Activated naive CD4-positive, alpha-beta T cell treated with anti-CD3 and anti-CD28 coated beads for 36 hours (primary cell): ENCODE measurements at regions of chr1 and their contacts with region 1.

Region 1: GRCh38 chr1:182839209-182840065 is at the start of gene DHX9:
- DNase-seq: peak; percentile 94
- H3K4me3 Mint-ChIP-seq: peak within 1 kb of the TSS; percentile 90
- H3K27ac Mint-ChIP-seq: peak within 1 kb of the TSS; percentile 95
- H3K4me1 Mint-ChIP-seq: peaks cover 44% of the 10 kb centered on the region
- H3K27me3 Mint-ChIP-seq: no peaks in the 10 kb centered on the region
- total RNA-seq, gene DHX9: 194 TPM

Region 2: DNA sequence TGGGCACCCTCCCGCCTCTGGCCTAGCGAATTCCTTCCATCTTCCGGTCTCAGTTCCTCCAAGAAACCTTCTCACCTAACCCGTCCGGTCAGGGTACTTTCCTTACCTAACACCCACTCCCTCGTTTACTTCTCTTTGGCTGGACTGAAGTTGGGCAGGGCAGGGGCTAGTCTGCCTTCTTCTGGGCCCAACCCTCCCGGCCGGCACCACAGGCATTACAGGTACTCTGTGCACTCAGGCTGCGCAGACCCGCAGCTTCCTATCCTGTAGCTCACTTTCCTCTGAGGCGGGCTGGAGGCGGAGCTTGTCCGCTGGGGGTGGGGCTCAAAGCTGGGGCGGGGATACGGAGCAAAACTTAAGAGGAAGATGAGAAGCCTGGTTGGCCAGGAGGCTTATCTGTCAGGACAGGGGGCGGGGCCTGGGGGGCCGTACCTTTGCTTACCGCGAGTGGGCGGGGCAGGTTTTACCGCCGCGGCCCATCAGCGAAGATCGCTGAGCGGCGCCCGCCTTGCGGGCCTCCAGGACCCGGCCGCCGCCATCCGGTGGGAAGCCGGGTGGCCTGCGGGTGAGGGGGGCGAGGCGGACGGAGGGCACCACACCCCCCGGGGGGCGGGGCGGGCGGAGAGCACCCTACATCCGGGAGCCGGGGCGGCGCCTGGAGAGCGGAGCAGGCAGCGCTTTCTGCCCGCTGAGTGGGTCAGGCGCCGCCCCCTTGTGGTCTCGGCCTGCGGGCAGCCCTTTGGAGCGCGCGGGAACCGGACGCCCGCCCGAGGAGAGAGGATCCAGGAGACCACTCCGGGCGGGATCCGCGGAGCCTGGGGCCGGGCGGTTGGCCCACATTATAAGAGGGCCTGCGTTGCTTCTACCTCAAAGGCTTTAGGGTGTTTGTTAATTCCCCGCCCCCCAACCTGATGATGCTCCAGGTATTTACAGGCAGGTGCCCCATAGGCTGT is 809.8 kb before region 1 on chr1:
- CTCF ChIA-PET with region 1: no interaction called
- intact Hi-C with region 1: loop called (anchors 1 kb)
- DNase-seq: peak; percentile 99
- H3K4me3 Mint-ChIP-seq: peak overlapping the region; percentile 95
- H3K27ac Mint-ChIP-seq: peak overlapping the region; percentile 95
- H3K4me1 Mint-ChIP-seq: peaks cover 9% of the 10 kb centered on the region
- H3K27me3 Mint-ChIP-seq: no peaks in the 10 kb centered on the region

Region 3: DNA sequence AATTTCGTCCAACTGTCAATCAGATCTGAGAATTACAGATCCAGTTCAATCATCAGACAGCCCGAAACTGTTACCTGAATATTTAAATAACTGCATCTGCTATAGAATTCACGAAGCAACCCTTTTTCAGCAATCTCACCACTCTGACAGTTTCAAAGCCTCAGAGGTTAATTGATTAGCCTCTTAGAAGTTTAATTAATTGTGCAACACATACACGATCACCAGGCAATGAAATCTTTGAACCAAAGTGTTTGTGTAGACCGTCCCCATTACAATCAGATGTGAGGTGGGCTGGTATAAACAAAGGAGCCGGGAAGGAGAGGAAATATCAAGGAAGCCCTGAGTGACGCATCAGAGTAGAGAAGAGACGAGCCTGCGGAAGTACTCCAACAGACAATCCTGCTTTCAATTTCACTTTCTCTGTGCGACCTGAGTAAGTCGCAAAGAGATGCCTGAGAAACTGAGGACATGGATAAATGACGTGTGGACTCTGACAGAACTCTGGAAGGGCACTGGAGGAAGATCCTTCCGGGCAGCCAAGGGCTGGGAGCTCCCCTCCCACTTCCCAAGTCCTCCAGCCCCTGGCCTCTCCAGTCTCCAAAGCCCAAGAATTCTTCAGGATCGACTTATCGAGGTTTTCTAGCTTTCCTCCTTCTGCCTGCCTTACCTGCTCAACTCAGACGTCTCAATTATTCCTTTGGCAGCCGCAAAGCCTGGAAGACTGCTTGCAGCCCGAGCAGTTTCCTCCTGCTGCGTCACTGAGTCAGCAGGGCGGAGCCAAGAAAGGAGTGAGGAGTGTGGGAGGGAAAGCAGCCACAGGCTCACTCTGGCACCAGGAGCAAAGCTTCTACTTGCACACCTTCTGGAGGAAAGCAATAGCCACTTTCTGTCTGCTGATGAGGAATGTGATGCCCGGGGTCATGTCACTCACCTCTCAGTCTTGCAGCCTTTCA is 250.7 kb before region 1 on chr1 and contains the start of gene RNASEL:
- CTCF ChIA-PET with region 1: no interaction called
- intact Hi-C with region 1: loop called (anchors 1 kb)
- DNase-seq: peak; percentile 62
- H3K4me3 Mint-ChIP-seq: peak within 1 kb of the TSS; percentile 86
- H3K27ac Mint-ChIP-seq: peak within 1 kb of the TSS; percentile 98
- H3K4me1 Mint-ChIP-seq: peaks cover 49% of the 10 kb centered on the region
- H3K27me3 Mint-ChIP-seq: no peaks in the 10 kb centered on the region
- total RNA-seq, gene RNASEL: 2.5 TPM

Region 4: DNA sequence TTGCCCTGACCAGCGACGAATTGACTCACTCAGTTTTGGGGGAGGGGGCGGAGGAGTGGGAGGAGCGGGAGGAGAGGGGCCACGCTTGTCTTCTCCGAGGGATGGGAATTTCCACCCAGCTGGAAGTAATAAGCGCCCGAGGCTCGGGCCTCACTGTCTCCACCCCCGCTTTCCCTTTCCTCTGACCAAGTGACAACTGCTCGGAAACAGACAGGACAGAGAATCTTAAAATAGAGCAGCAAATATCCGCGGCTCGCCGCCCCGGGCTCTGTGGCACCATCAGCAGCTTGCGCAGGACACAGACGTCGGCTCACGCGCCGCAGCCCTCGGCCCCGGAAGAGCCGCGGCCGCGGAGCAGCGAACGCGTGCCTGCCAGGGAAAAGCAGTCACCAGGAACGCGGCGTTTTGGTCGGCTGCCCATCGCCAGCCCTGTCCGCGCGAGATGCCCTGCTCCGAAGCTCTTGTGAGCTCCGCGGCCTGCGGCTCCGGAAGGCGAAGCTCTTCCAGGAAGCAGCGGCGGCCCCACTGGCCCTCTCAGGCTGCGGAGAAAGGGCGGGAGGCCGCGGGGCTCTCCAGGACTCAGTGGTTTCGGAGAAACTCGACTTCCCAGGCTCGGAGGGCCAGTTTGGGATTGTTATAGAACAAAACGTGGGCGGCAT is 224.5 kb before region 1 on chr1:
- CTCF ChIA-PET with region 1: no interaction called
- intact Hi-C with region 1: loop called (anchors 5 kb)
- DNase-seq: peak; percentile 72
- H3K4me3 Mint-ChIP-seq: peak overlapping the region; percentile 73
- H3K27ac Mint-ChIP-seq: peak overlapping the region; percentile 84
- H3K4me1 Mint-ChIP-seq: peaks cover 56% of the 10 kb centered on the region
- H3K27me3 Mint-ChIP-seq: peaks cover 5% of the 10 kb centered on the region

Region 5: DNA sequence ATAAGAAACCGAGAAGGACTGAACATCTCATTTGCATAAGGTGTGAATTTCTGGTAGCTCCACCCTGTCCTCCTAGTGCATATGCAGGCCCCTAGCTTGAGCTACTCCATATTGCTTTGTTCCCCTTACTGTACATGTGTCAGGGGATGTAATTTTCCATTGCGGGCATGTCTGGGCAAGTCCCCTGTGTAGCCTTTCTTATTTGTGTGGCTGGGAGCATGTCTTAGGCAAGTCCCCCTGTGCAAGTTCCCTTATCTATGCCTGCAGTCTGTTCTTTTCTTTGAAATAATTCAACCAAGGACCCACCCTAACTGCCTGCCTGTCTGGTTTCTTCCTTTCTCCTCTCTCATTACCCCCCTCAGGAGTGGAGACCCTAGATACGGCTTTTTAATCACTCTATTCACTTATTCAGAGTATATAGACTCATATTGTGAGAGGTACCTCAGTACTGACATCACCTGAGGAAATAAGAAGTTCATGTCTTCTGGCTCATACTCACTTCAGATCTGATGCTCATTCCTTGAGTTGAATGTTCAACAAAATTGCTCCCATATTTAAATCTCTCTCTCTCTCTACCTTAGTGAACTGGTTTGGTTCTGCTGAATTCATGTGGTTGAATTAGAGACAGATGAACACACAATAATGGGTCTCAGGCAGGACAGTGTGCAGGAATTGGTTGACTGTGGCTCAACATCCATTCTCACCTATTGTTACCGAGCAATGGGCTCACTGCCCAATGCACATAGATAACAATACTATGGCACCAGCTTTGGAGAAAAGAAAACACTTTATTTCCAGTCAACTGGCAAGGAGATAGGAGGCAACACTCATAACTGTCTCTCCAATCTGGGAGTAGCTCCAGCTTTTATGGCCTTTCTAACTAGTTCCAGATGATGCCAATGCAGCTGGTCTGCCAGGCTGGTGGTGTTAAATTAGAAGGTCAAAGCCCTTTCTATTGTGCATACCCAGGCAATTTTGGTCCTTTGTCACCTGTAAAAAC is 77.7 kb before region 1 on chr1:
- CTCF ChIA-PET with region 1: no interaction called
- intact Hi-C with region 1: loop called (anchors 1 kb)
- DNase-seq: peak; percentile 48
- H3K4me3 Mint-ChIP-seq: no peak overlapping the region
- H3K27ac Mint-ChIP-seq: peak overlapping the region; percentile 74
- H3K4me1 Mint-ChIP-seq: peaks cover 11% of the 10 kb centered on the region
- H3K27me3 Mint-ChIP-seq: peaks cover 7% of the 10 kb centered on the region

Region 6: DNA sequence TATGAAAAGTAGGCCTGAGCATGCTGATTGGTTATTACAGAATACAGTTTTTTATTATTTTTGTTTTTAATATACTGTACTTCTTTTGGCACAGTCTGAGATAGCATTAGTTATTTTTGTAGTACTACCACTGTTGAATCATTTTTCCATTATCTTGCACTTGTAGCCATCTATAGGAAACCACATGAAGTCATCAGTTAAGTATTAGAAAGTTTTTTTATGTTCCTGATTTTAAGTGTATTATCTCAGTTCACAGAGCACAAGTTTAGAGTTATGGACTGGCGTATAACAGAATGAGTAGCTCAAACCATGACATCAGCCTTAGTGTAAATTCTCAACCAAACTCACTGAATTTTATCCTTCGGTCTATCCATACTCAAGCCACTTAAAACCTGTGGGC is 22.6 kb after region 1 on chr1:
- CTCF ChIA-PET with region 1: no interaction called
- intact Hi-C with region 1: loop called (anchors 1 kb)
- DNase-seq: no peak
- H3K4me3 Mint-ChIP-seq: no peak overlapping the region
- H3K27ac Mint-ChIP-seq: peak overlapping the region; percentile 62
- H3K4me1 Mint-ChIP-seq: peaks cover 52% of the 10 kb centered on the region
- H3K27me3 Mint-ChIP-seq: no peaks in the 10 kb centered on the region

Region 7: GRCh38 chr1:183368202-183369108 is 529.0 kb after region 1 on chr1:
- CTCF ChIA-PET with region 1: no interaction called
- intact Hi-C with region 1: no loop called
- DNase-seq: no peak
- H3K4me3 Mint-ChIP-seq: no peak overlapping the region
- H3K27ac Mint-ChIP-seq: no peak overlapping the region
- H3K4me1 Mint-ChIP-seq: no peaks in the 10 kb centered on the region
- H3K27me3 Mint-ChIP-seq: peaks cover 10% of the 10 kb centered on the region

Region 8: DNA sequence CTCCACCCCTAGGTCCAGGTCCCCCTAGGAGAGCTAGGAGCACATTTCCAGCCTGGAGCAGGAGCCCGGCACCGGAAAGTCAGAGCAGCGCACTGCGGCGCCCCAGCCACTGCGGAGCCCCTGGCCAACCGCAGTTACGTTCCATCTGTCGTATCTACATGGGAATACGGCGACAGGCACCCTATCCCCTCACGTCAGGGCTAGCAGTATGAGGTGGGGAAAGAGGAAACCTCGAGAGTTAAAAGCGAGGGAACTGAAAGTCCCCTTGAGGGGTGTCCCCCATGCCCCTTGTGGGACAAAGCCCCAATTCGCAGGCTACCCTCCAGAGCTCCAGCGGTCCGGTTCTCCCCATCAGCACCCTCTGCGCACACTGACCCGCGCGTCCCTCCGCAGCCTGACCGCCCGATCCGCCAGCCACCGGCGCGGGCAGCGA is 1197.1 kb after region 1 on chr1:
- CTCF ChIA-PET with region 1: no interaction called
- intact Hi-C with region 1: loop called (anchors 1 kb)
- DNase-seq: peak; percentile 23
- H3K4me3 Mint-ChIP-seq: peak overlapping the region; percentile 58
- H3K27ac Mint-ChIP-seq: no peak overlapping the region
- H3K4me1 Mint-ChIP-seq: peaks cover 15% of the 10 kb centered on the region
- H3K27me3 Mint-ChIP-seq: peaks cover 68% of the 10 kb centered on the region